ENCODE measurements at regions of chr6 and their contacts with region 1.

Region 1: GRCh38 chr6:26234421-26235296 is 130.3 kb upstream of the BTN3A2 start:
- DNase-seq: no peak
- H3K4me3 ChIP-seq: peak overlapping the region; percentile 37
- H3K27me3 ChIP-seq: no peaks in the 10 kb centered on the region
- CTCF ChIP-seq: no peak

Region 2: GRCh38 chr6:26249957-26250697 is 15.5 kb after region 1 on chr6:
- CTCF ChIA-PET with region 1: interaction called, 11 read pairs
- POLR2A ChIA-PET with region 1: interaction called, 6 read pairs
- DNase-seq: no peak
- H3K4me3 ChIP-seq: peak overlapping the region; percentile 51
- H3K27me3 ChIP-seq: no peaks in the 10 kb centered on the region
- CTCF ChIP-seq: peak; percentile 52